Esophagus squamous epithelium (tissue), 5 donors: ENCODE measurements at regions of chr10 and their contacts with region 1.

Region 1: DNA sequence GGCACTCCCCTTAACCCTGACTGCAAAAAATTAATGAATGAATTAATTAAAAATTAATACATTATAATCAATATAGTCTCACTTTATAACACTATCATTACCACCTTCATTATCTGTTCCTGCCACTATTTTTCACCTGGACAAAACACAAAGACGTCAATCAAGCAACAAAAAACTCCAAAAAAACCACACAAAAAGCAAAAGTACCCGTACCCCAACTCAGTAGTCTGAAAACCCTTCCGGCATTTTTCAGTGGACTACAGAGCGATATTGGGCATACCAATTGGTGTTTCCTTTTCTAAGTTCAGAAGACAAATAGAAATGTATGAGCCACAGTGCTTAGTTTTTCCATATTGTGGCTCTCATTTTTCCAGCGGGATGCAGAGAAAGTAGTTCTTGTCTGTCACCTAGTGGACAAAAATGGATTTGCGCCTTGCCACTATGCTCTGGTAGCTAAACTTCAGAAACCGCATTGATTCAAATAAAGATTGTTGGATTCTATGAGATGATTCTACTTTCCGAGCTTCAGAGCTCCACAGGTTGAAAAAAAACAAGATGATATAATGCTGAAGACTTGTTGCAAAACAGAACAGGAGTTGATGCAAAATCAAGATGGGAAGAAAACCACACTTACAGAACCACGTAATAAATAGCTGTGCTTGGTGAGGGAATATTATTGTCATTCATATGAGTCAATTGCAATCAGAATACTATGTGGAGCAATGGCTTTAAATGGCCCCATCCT is 50.6 kb upstream of the ITGB1 start:
- DNase-seq: no peak
- H3K4me3 ChIP-seq: peak overlapping the region in 1 of 4 donors; percentile 31
- H3K27ac ChIP-seq: peak overlapping the region in 1 of 4 donors; percentile 34
- H3K4me1 ChIP-seq: peaks cover 3 to 42% (median 15%) of the 10 kb centered on the region in 3 donors
- H3K27me3 ChIP-seq: no peaks in the 10 kb centered on the region
- CTCF ChIP-seq: peak; percentile 89 to 99 (median 98)
- POLR2A ChIP-seq: no peak

Region 2: DNA sequence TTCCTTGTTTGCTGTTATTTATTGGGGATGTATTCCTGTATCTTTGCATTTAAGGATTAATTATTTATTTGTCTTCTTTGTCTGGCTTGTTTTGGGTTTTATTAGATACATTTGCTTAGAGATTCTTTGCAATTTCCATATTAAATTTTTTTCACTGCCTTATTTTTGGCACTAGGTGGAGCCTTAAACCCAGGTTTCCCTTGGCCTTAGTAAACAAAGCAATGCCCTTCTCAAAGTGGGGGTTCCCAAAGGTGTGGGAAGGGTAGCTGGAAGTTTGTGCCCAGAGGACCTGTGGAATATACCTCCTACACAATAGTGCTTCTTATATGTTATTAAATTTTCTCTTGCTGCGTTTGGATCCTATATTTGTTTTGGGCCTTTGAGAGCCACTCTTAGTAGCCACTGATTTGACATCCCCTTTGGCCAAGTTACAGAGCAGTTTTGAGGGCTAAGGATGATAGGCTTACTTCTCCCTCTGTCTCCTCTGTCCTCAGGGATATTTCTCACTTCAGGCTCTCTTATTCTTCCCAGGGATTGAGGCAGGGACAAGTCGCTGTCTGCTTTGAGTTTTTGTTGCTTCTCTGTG is 213.0 kb before region 1 on chr10:
- intact Hi-C with region 1: loop called (anchors 5 kb)
- DNase-seq: no peak
- H3K4me3 ChIP-seq: no peak overlapping the region
- H3K27ac ChIP-seq: no peak overlapping the region
- H3K4me1 ChIP-seq: no peaks in the 10 kb centered on the region
- H3K27me3 ChIP-seq: no peaks in the 10 kb centered on the region
- CTCF ChIP-seq: peak; percentile 40 to 75 (median 60)
- POLR2A ChIP-seq: no peak

Region 3: GRCh38 chr10:33125522-33126517 is 117.1 kb after region 1 on chr10:
- intact Hi-C with region 1: loop called (anchors 10 kb)
- DNase-seq: no peak
- H3K4me3 ChIP-seq: no peak overlapping the region
- H3K27ac ChIP-seq: peak overlapping the region; percentile 79 to 88 (median 84)
- H3K4me1 ChIP-seq: peaks cover 23 to 73% (median 40%) of the 10 kb centered on the region in 3 donors
- H3K27me3 ChIP-seq: no peaks in the 10 kb centered on the region
- CTCF ChIP-seq: no peak
- POLR2A ChIP-seq: peak in 1 of 4 donors; percentile 17